Ovary (tissue), 10 donors: ENCODE measurements at regions of chr2 and their contacts with region 1.

Region 1: GRCh38 chr2:97688062-97688827 is 18.7 kb downstream of the C2orf92 start:
- DNase-seq: no peak
- H3K4me3 ChIP-seq: no peak overlapping the region
- H3K27ac ChIP-seq: no peak overlapping the region
- H3K4me1 ChIP-seq: no peaks in the 10 kb centered on the region
- H3K27me3 ChIP-seq: no peaks in the 10 kb centered on the region
- CTCF ChIP-seq: no peak
- EP300 ChIP-seq: no peak
- POLR2A ChIP-seq: no peak

Region 2: GRCh38 chr2:97663965-97664635 is 24.1 kb before region 1 on chr2 and contains the start of gene ACTR1B:
- intact Hi-C with region 1: no loop called
- DNase-seq: peak; percentile 97 to 98 (median 98)
- H3K4me3 ChIP-seq: peak within 1 kb of the TSS; percentile 66
- H3K27ac ChIP-seq: peak within 1 kb of the TSS; percentile 51 to 87
- H3K4me1 ChIP-seq: peaks cover 12% of the 10 kb centered on the region
- H3K27me3 ChIP-seq: no peaks in the 10 kb centered on the region
- CTCF ChIP-seq: peak; percentile 18 to 64 (median 50)
- EP300 ChIP-seq: no peak
- POLR2A ChIP-seq: peak; percentile 84
- total RNA-seq, gene ACTR1B: 39.3 to 85.2 (median 67.4) TPM

Region 3: DNA sequence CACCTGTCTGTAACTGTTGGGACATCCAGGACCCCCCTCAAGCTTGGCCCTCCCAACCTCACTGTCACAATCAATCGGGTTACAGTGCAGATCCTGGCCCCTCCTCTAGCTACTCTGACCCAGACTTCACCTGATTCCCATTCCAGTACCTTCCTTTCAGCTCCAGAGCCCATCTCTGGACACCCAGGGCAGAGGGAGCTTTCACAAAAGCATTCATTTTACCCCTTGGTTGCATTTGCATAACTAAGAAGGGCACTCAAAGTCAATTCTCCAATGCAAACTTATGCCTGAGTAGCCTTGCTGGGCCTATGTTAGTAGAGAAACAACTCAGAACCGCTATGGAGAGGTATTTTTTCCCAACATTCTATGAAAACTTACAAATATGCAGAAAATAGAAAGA is 32.5 kb after region 1 on chr2:
- intact Hi-C with region 1: loop called in 1 of 4 experiments (anchors 1 kb)
- DNase-seq: no peak
- H3K4me3 ChIP-seq: no peak overlapping the region
- H3K27ac ChIP-seq: no peak overlapping the region
- H3K4me1 ChIP-seq: no peaks in the 10 kb centered on the region
- H3K27me3 ChIP-seq: no peaks in the 10 kb centered on the region
- CTCF ChIP-seq: no peak
- EP300 ChIP-seq: no peak
- POLR2A ChIP-seq: no peak

Region 4: DNA sequence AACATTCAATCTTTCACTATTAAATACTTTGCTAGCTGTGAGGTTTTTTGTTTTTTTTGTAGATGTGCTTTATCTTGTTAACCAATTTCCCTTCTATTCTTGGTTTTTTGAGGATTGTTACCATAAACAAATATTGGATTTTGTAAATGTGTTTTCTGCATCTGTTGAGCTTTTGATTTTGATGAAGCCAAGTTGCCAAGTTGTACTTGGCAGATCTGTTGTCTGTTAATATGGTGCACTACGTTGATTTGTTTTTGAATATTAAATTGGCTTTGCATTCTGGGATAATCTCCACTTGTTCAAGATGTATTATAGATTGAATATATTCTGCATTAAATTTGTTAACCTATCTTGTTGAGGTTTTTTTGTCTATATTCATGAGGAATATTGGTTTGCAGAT is 513.3 kb after region 1 on chr2:
- intact Hi-C with region 1: no loop called
- DNase-seq: no peak
- H3K4me3 ChIP-seq: no peak overlapping the region
- H3K27ac ChIP-seq: no peak overlapping the region
- H3K4me1 ChIP-seq: no peaks in the 10 kb centered on the region
- H3K27me3 ChIP-seq: no peaks in the 10 kb centered on the region
- CTCF ChIP-seq: no peak
- EP300 ChIP-seq: no peak
- POLR2A ChIP-seq: no peak